PC-9 (cell line): ENCODE measurements at regions of chr12 and their contacts with region 1.

Region 1: DNA sequence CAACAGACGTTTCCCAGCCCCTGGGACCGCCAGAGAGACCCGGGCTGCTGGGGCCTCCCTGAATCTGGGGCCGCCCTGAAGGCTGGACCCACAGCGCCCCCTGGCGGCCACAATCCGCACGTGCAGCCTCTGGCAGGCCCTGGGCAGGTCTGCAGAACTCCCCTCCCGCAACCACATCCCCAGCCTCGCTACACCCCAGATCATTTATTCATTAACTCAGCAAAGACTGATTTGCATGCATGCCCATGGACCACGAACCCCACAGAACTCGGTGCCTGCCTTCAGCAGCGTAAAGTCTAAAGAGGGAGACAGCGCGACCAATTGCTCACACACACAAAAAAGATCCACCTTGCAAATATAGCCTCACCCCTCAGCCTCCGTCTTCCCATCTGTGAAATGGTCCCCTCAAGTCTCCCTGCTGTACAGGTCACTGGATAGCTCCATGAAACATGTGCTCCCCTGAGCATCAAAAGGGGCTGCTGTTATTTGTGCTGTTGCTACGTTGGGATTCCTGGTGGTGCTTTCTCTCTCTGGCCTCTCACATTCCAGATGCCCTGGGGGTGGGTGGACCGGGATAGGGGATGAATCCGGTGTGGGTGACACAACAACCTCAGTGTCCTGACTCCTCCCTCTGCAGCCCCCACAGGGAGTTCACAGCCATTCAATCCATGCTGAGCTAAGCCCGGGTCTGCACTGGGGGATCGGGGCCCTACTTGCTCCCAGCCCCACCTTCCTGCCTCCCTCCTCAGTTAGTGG is 96.4 kb downstream of the SCARB1 start:
- DNase-seq: peak in 1 of 2 experiments; percentile 71
- H3K4me3 ChIP-seq: no peak overlapping the region
- H3K27ac ChIP-seq: no peak overlapping the region
- H3K4me1 ChIP-seq: peaks cover 25% of the 10 kb centered on the region
- H3K27me3 ChIP-seq: no peaks in the 10 kb centered on the region
- CTCF ChIP-seq: peak; percentile 99

Region 2: GRCh38 chr12:124036674-124037109 is 730.6 kb before region 1 on chr12:
- CTCF ChIA-PET with region 1: no interaction called
- POLR2A ChIA-PET with region 1: no interaction called
- intact Hi-C with region 1: loop called (anchors 1 kb)
- DNase-seq: peak in 1 of 2 experiments; percentile 37
- H3K4me3 ChIP-seq: no peak overlapping the region
- H3K27ac ChIP-seq: no peak overlapping the region
- H3K4me1 ChIP-seq: no peaks in the 10 kb centered on the region
- H3K27me3 ChIP-seq: no peaks in the 10 kb centered on the region
- CTCF ChIP-seq: peak; percentile 91

Region 3: GRCh38 chr12:124518051-124518932 is 249.0 kb before region 1 on chr12:
- CTCF ChIA-PET with region 1: no interaction called
- POLR2A ChIA-PET with region 1: no interaction called
- intact Hi-C with region 1: loop called (anchors 5 kb)
- DNase-seq: peak; percentile 95
- H3K4me3 ChIP-seq: peak overlapping the region; percentile 59
- H3K27ac ChIP-seq: peak overlapping the region; percentile 91
- H3K4me1 ChIP-seq: peaks cover 54% of the 10 kb centered on the region
- H3K27me3 ChIP-seq: no peaks in the 10 kb centered on the region
- CTCF ChIP-seq: no peak

Region 4: GRCh38 chr12:124713436-124714082 is 53.7 kb before region 1 on chr12:
- CTCF ChIA-PET with region 1: no interaction called
- POLR2A ChIA-PET with region 1: no interaction called
- intact Hi-C with region 1: loop called (anchors 1 kb)
- DNase-seq: peak in 1 of 2 experiments; percentile 62
- H3K4me3 ChIP-seq: no peak overlapping the region
- H3K27ac ChIP-seq: no peak overlapping the region
- H3K4me1 ChIP-seq: peaks cover 26% of the 10 kb centered on the region
- H3K27me3 ChIP-seq: no peaks in the 10 kb centered on the region
- CTCF ChIP-seq: no peak

Region 5: GRCh38 chr12:125065021-125065795 is 298.0 kb after region 1 on chr12 and contains the start of gene AACS:
- CTCF ChIA-PET with region 1: no interaction called
- POLR2A ChIA-PET with region 1: no interaction called
- intact Hi-C with region 1: no loop called
- DNase-seq: peak; percentile 37 to 66
- H3K4me3 ChIP-seq: peak within 1 kb of the TSS; percentile 90
- H3K27ac ChIP-seq: no peak within 1 kb of the TSS
- H3K4me1 ChIP-seq: peaks cover 16% of the 10 kb centered on the region; the same call in 1 of the 2 replicates
- H3K27me3 ChIP-seq: no peaks in the 10 kb centered on the region
- CTCF ChIP-seq: no peak
- total RNA-seq, gene AACS: 46.8 and 48.5 TPM in 2 replicates